Right ventricle myocardium inferior (tissue), 1 donor: ENCODE measurements at regions of chr2 and their contacts with region 1.

Region 1: DNA sequence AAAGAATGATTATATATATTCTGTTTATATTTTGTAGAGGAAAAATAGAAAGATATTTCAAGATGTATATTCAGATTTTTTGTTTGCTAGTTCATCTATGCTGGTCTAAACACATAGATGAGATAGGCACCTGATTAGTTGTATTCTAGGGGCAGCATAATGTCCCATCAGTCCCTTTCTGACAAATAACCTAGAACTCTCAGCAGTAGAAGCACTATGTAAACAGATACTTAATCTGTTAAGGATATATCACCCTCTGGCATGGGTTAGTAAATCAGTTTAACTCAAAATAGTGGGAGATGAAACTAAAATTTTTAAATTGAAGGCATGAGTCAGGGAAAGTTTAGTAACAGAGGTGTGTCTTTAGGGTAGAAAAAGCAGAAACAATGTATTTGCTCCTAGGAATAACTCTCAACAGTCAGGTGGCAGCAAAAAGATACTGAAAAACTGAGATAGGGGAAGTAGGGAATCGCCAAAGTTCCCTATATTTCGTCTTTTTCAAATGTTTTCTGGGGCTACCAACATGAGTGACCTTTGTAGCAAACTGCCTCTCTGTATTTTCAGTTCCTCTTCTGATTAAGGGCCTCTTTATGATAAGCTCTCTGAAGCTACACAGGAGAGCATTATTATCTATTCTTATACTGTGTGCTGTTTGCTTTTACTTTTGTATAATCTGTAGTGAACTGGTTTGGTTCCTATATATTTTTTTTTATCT is 5.7 kb downstream of the PPP1R1C start:
- DNase-seq: no peak
- ATAC-seq: no peak

Region 2: GRCh38 chr2:182038578-182038977 is 47.2 kb after region 1 on chr2:
- intact Hi-C with region 1: no loop called
- DNase-seq: no peak
- ATAC-seq: peak; percentile 65

Region 3: GRCh38 chr2:182968493-182968892 is 977.2 kb after region 1 on chr2:
- intact Hi-C with region 1: loop called (anchors 5 kb)
- DNase-seq: no peak
- ATAC-seq: no peak